PC-9 (cell line): ENCODE measurements at regions of chrX and their contacts with region 1.

Region 1: GRCh38 chrX:110678593-110678992 is 117.0 kb downstream of the CHRDL1 start:
- DNase-seq: no peak
- H3K4me3 ChIP-seq: no peak overlapping the region
- H3K27ac ChIP-seq: no peak overlapping the region
- H3K4me1 ChIP-seq: no peaks in the 10 kb centered on the region
- H3K27me3 ChIP-seq: no peaks in the 10 kb centered on the region
- CTCF ChIP-seq: no peak

Region 2: DNA sequence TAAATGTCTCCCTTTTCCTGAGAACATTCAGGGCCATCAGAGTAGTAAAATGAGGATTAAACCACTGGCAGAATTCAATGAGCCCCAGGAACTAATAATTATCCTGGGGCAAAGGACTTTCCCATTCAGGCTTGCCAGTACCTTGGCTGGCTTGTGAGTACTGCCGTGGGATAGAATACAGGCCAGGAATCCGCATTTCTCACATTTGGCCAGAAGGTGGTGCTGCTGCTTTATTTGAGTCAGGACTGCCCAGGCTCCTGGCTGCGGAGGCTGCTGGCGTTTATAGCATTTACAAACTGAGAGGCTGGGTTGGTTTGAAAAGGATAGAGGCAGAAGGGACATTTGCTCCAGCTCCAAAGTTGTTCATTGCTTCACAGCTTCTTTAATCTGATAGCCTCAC is 228.5 kb before region 1 on chrX:
- CTCF ChIA-PET with region 1: no interaction called
- POLR2A ChIA-PET with region 1: no interaction called
- intact Hi-C with region 1: no loop called
- DNase-seq: peak; percentile 55 to 75
- H3K4me3 ChIP-seq: no peak overlapping the region
- H3K27ac ChIP-seq: no peak overlapping the region
- H3K4me1 ChIP-seq: no peaks in the 10 kb centered on the region
- H3K27me3 ChIP-seq: peaks cover 47% of the 10 kb centered on the region
- CTCF ChIP-seq: peak; percentile 89

Region 3: DNA sequence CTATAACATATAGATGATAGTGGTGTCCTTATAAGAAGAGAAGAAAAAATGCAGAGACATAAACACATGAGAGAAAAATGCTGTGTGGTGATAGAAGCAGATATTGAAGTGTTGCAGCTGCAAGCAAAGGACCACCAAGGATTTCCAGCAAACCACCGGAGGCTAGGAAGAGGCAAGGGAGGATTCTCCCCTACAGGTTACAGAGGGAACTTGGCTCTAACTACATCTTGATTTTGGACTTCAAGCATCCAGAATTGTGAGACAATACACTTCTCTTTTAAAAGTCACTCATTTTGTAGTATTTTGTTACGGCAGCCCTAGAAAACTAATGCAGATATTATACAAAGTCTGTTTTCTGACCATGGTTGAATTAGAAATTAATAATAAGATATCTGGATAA is 147.4 kb after region 1 on chrX:
- CTCF ChIA-PET with region 1: interaction called, 16 read pairs
- POLR2A ChIA-PET with region 1: no interaction called
- intact Hi-C with region 1: no loop called
- DNase-seq: no peak
- H3K4me3 ChIP-seq: no peak overlapping the region
- H3K27ac ChIP-seq: no peak overlapping the region
- H3K4me1 ChIP-seq: no peaks in the 10 kb centered on the region
- H3K27me3 ChIP-seq: no peaks in the 10 kb centered on the region
- CTCF ChIP-seq: no peak